ENCODE measurements at regions of chr16 and their contacts with region 1.

Region 1: DNA sequence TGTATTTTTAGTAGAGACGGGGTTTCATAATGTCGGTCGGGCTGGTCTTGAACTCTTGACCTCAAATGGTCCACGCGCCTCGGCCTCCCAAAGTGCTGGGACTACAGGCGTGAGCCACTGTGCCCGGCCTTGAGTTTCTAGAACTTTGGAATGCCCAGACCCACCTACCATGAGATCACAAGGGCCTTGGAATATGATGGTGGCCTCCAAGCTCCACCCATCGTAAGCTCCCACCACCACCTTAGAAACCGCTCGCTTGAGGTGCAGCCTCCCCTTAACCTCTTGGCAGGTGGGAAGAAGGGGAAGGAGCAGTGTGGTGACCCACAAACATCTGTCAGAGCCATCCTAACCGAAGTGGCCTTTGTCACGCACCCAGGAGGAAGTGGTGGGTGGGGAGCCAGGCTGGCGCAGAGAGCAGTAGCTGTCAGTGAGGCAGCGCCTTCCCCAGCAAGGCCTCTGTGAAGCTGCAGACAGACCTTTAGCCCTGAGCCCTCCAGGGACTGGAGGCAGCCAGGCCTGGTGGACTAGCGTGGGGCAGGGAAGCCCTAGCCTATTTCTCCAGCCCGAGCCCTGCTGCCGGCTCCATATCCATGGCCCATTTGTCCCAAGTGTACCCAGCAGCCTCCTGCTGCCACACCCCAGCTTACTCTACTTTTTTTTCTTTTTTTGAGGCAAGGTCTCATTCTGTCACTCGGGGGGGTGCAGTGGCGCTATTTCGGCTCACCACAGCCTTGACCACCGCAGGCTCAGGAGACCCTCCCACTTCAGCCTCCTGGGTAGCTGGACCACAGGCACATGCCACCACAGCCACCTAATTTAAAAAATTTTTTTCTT is 13.1 kb upstream of the SEPHS2 start:
- DNase-seq: peak; percentile 56
- CTCF ChIP-seq: no peak

Region 2: DNA sequence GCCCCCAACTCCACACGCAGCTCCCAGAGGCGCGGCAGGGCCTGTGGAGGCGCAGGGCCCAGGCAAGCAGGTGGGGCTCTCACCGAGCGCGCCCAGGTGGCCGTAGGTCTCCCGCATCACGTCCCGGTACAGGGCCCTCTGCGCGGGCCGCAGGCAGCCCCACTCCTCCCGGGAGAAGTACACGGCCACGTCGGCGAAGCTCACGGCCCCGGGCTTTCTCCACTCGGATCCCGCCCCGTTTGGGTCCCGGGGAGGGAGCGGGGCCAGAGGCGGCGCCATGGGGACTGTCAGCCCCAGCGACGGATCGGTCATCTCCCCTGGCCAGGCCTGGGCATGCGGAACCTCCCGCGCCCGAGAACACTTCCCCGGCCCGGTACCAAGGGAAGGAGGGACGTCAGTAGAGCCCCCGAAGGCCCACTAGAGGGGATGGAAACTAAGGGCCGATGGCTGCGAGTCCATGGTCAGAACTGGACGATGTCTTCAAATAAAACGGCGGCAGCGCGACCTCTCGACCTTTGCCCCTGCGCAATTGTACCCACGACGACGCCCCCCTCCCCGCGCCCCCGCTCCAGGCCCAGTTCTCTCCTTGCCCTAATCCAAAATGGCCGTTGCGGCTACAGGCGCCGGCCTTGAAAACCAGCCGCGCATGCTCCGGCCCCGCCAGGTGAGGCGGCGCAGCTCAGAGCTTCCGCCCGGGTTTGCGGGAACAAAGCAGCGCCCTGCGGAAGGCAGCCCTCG is 75.8 kb after region 1 on chr16 and contains the start of gene ZNF747:
- in situ Hi-C with region 1: loop called (anchors 10 kb)
- DNase-seq: peak; percentile 95
- CTCF ChIP-seq: no peak